GM13977 (cell line): ENCODE measurements at regions of chr1 and their contacts with region 1.

Region 1: DNA sequence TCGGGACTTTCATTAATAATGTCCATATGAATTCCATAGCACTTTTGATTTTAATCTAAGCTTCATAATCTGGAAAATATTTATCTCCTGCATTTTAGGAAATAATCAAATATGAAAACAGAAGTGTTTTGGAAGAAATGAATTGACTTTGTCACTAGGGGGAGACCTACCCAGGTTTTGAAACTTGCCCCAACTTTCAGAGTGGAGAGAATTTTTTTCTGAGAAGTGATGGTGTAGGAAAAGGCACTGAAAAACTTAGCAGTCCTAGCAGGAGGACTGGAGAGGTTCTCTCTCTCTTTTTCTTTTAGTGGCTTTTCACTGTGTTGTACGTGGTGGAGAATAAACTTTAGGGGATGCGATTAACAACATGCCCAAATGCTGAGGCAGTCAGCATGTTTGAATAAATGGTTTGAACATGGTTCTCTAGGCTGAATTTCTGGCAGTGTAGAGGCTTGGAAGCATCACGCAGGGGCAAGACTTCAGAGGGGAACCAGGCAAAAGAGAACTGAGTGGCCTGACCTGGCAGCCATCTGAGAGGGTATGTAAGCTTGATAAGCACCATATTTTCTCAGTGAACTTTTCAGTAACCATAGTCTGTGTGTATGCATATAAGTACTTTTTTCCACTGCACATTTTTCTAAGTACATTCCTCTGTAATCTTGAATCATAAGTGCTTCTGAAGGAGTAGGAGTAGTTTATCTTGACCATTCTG is 68.3 kb upstream of the NEK7 start:
- DNase-seq: peak; percentile 38
- CTCF ChIP-seq: peak; percentile 38

Region 2: DNA sequence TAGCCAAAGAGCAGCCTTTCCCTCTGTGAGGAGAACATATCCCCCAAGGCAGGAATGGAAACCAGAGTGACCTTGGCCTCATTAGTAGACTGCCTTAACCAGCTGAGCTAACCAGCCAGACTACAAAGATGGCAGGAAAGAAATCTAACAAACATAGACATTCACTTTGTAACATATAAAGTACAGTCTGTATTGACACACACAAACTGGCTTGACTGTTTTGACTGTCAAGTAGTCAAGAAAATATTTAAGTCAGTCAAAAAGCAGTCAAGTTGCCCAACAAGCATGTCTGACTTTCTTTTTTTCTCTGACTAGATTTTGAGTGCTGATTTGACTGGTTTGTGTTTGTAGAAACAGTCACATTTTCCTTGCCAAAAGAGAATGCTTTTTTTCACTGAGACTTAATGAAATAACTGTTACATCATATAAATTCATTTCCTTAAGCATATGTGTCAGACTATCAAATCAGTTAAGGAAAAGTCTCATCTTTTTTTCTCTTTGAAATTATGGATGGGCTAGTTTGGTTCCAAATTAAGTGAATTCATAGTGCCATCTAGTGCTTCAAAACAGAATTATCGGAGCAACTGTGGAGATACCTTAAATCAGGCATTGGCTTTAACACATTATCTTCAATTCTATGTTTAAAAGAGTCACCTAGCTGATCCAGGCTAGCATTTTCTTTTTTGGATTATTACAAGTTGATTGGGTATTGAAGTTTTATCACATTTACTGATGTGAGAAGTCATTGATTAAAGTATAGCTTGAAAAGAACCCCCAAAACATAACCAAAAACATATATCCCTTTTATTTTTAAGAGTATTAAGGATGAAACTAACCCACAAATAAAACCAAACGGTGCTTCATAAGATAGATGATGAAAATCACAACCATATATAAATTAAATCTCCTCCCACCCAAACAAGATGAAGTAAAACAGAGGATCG is 377.0 kb after region 1 on chr1:
- in situ Hi-C with region 1: loop called (anchors 10 kb)
- DNase-seq: peak; percentile 23
- CTCF ChIP-seq: peak; percentile 71